ENCODE measurements at regions of chr12 and their contacts with region 1.

Region 1: DNA sequence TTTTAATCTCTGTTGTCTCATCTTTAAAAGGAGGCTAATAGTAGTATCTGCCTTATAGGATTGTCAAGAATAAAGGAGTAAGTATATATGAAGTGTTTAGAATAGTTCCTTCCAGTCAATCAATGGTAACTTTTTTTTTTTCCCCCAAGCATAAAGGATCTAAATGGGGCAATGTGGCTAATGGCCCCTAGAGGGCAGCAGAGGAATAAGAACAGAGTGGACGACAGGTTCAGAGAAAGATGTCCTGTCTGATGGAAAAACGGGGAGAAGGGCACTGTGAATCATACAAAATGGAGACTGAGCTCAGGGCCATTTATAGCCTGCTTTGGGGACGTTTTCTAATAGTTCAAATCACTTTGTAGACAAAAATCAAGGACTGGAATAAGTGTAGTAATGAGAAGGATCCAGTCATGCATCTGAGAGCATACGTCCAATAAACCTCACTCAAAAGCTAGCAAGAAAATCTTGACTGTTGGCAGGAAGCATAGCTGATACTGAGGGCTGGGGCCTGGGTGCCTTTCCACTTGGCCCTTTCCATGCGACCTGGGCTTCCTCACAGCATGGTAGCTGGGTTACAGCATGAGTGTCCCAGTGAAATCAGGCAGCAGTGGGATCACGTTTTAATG is 51.3 kb downstream of the IFNG-AS1 start:
- DNase-seq: peak; percentile 71
- H3K4me3 Mint-ChIP-seq: no peak overlapping the region
- H3K27ac Mint-ChIP-seq: peak overlapping the region; percentile 66
- H3K4me1 Mint-ChIP-seq: peaks cover 51% of the 10 kb centered on the region
- H3K27me3 Mint-ChIP-seq: no peaks in the 10 kb centered on the region

Region 2: GRCh38 chr12:68001486-68002466 is 38.8 kb before region 1 on chr12:
- CTCF ChIA-PET with region 1: interaction called, 11 read pairs
- POLR2A ChIA-PET with region 1: no interaction called
- intact Hi-C with region 1: loop called (anchors 1 kb)
- DNase-seq: no peak
- H3K4me3 Mint-ChIP-seq: no peak overlapping the region
- H3K27ac Mint-ChIP-seq: peak overlapping the region; percentile 15
- H3K4me1 Mint-ChIP-seq: peaks cover 15% of the 10 kb centered on the region
- H3K27me3 Mint-ChIP-seq: no peaks in the 10 kb centered on the region

Region 3: GRCh38 chr12:68137335-68137830 is 96.8 kb after region 1 on chr12:
- CTCF ChIA-PET with region 1: interaction called, 5 read pairs
- POLR2A ChIA-PET with region 1: no interaction called
- intact Hi-C with region 1: loop called (anchors 5 kb)
- DNase-seq: peak; percentile 25
- H3K4me3 Mint-ChIP-seq: no peak overlapping the region
- H3K27ac Mint-ChIP-seq: peak overlapping the region; percentile 75
- H3K4me1 Mint-ChIP-seq: peaks cover 59% of the 10 kb centered on the region
- H3K27me3 Mint-ChIP-seq: no peaks in the 10 kb centered on the region

Region 4: GRCh38 chr12:68223083-68223747 is 182.7 kb after region 1 on chr12:
- CTCF ChIA-PET with region 1: interaction called, 64 read pairs
- POLR2A ChIA-PET with region 1: no interaction called
- intact Hi-C with region 1: loop called (anchors 1 kb)
- DNase-seq: peak; percentile 83
- H3K4me3 Mint-ChIP-seq: no peak overlapping the region
- H3K27ac Mint-ChIP-seq: no peak overlapping the region
- H3K4me1 Mint-ChIP-seq: peaks cover 17% of the 10 kb centered on the region
- H3K27me3 Mint-ChIP-seq: peaks cover 7% of the 10 kb centered on the region

Region 5: DNA sequence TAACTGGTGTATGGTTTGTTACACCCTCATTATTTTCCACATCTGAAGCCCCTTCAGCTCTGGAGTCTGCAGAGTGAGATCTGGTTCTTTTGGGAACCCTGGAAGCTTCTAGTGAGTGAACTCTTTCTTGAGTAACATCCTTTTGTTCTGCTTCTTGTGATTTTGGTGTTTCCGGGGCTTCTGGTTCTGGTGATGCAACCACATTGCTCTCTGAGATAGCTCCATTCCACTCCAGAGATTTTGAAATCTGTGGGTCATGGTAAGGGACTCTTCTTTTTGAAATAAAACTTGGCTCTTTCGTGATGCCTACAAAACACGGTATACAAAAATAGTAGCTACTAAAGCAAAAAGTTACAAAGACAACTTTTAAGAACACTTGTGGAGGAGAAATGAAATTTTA is 286.2 kb after region 1 on chr12:
- CTCF ChIA-PET with region 1: interaction called, 10 read pairs
- POLR2A ChIA-PET with region 1: no interaction called
- intact Hi-C with region 1: loop called (anchors 5 kb)
- DNase-seq: no peak
- H3K4me3 Mint-ChIP-seq: no peak overlapping the region
- H3K27ac Mint-ChIP-seq: no peak overlapping the region
- H3K4me1 Mint-ChIP-seq: peaks cover 16% of the 10 kb centered on the region
- H3K27me3 Mint-ChIP-seq: no peaks in the 10 kb centered on the region

Measured in activated CD4-positive, alpha-beta memory T cell treated with anti-CD3 and anti-CD28 coated beads for 36 hours (primary cell).